Lower leg skin (tissue), 4 donors: ENCODE measurements at regions of chr19 and their contacts with region 1.

Region 1: DNA sequence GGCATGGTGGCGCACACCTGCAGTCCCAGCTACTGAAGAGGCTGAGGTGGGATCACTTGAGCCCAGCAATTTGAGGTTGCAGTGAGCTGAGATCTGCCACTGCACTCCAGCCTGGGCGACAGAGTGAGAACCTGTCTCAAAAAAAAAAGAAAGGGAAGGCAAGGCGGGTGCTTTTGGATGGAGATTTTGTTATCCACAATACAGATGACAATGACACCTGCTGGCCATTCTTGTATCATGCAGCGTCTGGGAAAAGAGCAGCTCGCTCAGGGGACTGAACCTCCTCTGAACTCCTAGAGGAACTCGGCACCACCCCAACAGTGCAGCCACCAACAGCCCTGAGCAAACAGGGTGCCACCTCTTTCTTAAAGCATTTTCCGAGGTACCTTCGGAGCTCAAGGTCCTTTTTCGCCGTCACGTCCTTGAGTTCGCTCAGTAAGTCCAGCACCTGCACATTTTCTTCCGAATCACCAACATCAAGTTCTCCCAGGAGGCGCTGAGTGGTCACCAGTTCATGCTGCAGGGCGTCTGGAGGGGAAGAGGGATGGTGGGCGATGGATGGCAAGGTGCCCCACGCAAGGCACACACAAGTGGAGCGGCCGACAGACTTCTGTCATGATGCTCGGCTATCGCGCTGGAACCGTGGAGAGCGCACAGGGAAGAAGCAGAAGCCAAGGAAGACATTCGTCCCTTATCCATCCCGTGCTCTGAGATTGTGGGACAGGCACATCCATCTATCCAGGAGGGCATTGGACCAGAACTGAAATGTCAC is 22.6 kb downstream of the HAUS8 start:
- DNase-seq: no peak
- H3K4me3 ChIP-seq: no peak overlapping the region
- CTCF ChIP-seq: no peak
- POLR2A ChIP-seq: no peak

Region 2: DNA sequence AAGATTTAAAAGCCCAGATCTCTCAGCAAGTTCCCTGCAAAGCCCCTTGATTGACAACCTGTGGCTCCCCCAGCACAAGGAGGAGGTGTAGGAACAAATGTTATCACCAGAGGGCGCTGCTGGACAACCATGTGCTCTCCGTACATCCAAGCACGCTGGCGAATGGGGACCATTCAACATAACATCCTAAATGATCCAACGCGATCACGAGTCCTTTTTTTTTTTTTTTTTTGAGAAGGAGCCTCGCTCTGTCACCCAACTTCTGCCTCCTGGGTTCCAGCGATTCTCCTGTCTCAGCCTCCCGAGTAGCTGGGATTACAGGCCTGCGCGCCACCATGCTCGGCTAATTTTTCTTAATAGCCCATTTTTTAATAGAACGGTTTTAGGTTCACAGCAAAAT is 281.0 kb before region 1 on chr19:
- intact Hi-C with region 1: loop called (anchors 5 kb)
- DNase-seq: peak; percentile 79 to 95
- H3K4me3 ChIP-seq: no peak overlapping the region
- CTCF ChIP-seq: peak in 1 of 3 donors; percentile 86
- POLR2A ChIP-seq: no peak